ENCODE measurements at regions of chr13 and their contacts with region 1.

Region 1: GRCh38 chr13:84810781-84811180 is 928.5 kb upstream of the SLITRK1 start:
- DNase-seq: no peak
- H3K4me3 ChIP-seq: no peak overlapping the region
- H3K27ac ChIP-seq: no peak overlapping the region
- H3K4me1 ChIP-seq: no peaks in the 10 kb centered on the region
- H3K27me3 ChIP-seq: no peaks in the 10 kb centered on the region
- CTCF ChIP-seq: no peak
- POLR2A ChIP-seq: no peak

Region 2: GRCh38 chr13:84263354-84264069 is 547.3 kb before region 1 on chr13:
- CTCF ChIA-PET with region 1: no interaction called
- POLR2A ChIA-PET with region 1: no interaction called
- dilution Hi-C with region 1: no loop called
- intact Hi-C with region 1: no loop called
- DNase-seq: no peak
- H3K4me3 ChIP-seq: no peak overlapping the region
- H3K27ac ChIP-seq: no peak overlapping the region
- H3K4me1 ChIP-seq: no peaks in the 10 kb centered on the region
- H3K27me3 ChIP-seq: no peaks in the 10 kb centered on the region
- CTCF ChIP-seq: no peak
- POLR2A ChIP-seq: no peak

Region 3: GRCh38 chr13:84821261-84821660 is 10.5 kb after region 1 on chr13:
- CTCF ChIA-PET with region 1: no interaction called
- POLR2A ChIA-PET with region 1: no interaction called
- dilution Hi-C with region 1: no loop called
- intact Hi-C with region 1: loop called (anchors 1 kb)
- DNase-seq: no peak
- H3K4me3 ChIP-seq: no peak overlapping the region
- H3K27ac ChIP-seq: no peak overlapping the region
- H3K4me1 ChIP-seq: no peaks in the 10 kb centered on the region
- H3K27me3 ChIP-seq: no peaks in the 10 kb centered on the region
- CTCF ChIP-seq: no peak
- POLR2A ChIP-seq: no peak

Region 4: GRCh38 chr13:84885868-84886267 is 75.1 kb after region 1 on chr13:
- CTCF ChIA-PET with region 1: no interaction called
- POLR2A ChIA-PET with region 1: no interaction called
- dilution Hi-C with region 1: no loop called
- intact Hi-C with region 1: no loop called
- DNase-seq: no peak
- H3K4me3 ChIP-seq: no peak overlapping the region
- H3K27ac ChIP-seq: no peak overlapping the region
- H3K4me1 ChIP-seq: no peaks in the 10 kb centered on the region
- H3K27me3 ChIP-seq: no peaks in the 10 kb centered on the region
- CTCF ChIP-seq: no peak
- POLR2A ChIP-seq: no peak

Measured in endothelial cell of umbilical vein (primary cell).